Heart left ventricle (tissue), 16 donors: ENCODE measurements at regions of chr9 and their contacts with region 1.

Region 1: GRCh38 chr9:120936011-120936763 is 9.6 kb upstream of the TRAF1 start:
- DNase-seq: peak; percentile 93 to 96 (median 93)
- ATAC-seq: peak; percentile 73 to 88 (median 79)
- H3K4me3 ChIP-seq: peak overlapping the region in 2 of 12 donors; percentile 6 to 23
- H3K27ac ChIP-seq: peak overlapping the region; percentile 47 to 98 (median 72)
- H3K4me1 ChIP-seq: peaks cover 5 to 60% (median 39%) of the 10 kb centered on the region in 12 donors
- H3K27me3 ChIP-seq: no peaks in the 10 kb centered on the region
- CTCF ChIP-seq: peak; percentile 84 to 97 (median 93)
- POLR2A ChIP-seq: no peak

Region 2: DNA sequence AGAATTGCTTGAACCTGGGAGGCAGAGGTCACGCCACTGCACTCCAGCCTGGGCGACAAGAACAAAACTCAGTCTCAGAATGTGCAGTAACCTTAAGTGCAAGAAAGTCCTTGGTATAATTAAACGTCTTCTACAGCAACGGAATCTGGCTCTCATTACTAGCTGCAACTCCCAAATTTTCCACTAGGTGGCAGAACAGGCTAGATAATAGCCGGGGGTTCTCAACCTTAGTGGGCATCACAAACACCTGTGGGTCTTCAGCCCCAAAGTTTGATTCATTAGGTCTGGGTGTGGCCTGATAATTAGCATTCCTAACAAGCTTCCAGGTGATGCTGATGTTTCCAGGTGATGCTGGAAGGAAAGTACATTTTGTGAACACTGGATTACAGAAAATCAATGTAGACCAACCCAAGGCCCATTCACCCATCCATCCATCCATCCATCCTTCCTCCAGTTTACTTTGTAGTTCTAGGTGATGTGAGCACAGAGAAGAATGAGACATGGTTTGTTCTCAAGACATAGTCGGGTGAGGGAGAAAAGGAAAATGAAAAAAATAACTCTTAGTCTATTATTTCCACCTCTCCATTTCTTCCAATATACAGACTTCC is 180.3 kb before region 1 on chr9:
- intact Hi-C with region 1: loop called (anchors 1 to 5 kb)
- DNase-seq: peak in 2 of 5 donors; percentile 18 to 40
- ATAC-seq: peak in 3 of 4 donors; percentile 54 to 69 (median 68)
- H3K4me3 ChIP-seq: no peak overlapping the region
- H3K27ac ChIP-seq: no peak overlapping the region
- H3K4me1 ChIP-seq: peaks cover 0 to 27% (median 0%) of the 10 kb centered on the region in 12 donors
- H3K27me3 ChIP-seq: no peaks in the 10 kb centered on the region
- CTCF ChIP-seq: peak; percentile 82 to 95 (median 88)
- POLR2A ChIP-seq: peak in 1 of 2 donors; percentile 9

Region 3: GRCh38 chr9:120761011-120761410 is 175.2 kb before region 1 on chr9:
- intact Hi-C with region 1: loop called in 9 of 10 experiments (anchors 1 to 5 kb)
- DNase-seq: no peak
- ATAC-seq: no peak
- H3K4me3 ChIP-seq: no peak overlapping the region
- H3K27ac ChIP-seq: no peak overlapping the region
- H3K4me1 ChIP-seq: peaks cover 0 to 21% (median 0%) of the 10 kb centered on the region in 12 donors
- H3K27me3 ChIP-seq: no peaks in the 10 kb centered on the region
- CTCF ChIP-seq: no peak
- POLR2A ChIP-seq: no peak

Region 4: GRCh38 chr9:120792898-120793765 is 143.1 kb before region 1 on chr9 and contains the start of gene FBXW2:
- intact Hi-C with region 1: loop called in 2 of 10 experiments (anchors 5 kb)
- DNase-seq: peak; percentile 94 to 96 (median 95)
- ATAC-seq: peak; percentile 100
- H3K4me3 ChIP-seq: peak within 1 kb of the TSS; percentile 64 to 97 (median 82)
- H3K27ac ChIP-seq: peak within 1 kb of the TSS; percentile 45 to 96 (median 90)
- H3K4me1 ChIP-seq: peaks cover 3 to 51% (median 26%) of the 10 kb centered on the region in 12 donors
- H3K27me3 ChIP-seq: no peaks in the 10 kb centered on the region
- CTCF ChIP-seq: peak in 1 of 12 donors; percentile 6
- POLR2A ChIP-seq: peak in 1 of 2 donors; percentile 91
- total RNA-seq, gene FBXW2: 27.0 to 58.7 (median 42.0) TPM

Region 5: DNA sequence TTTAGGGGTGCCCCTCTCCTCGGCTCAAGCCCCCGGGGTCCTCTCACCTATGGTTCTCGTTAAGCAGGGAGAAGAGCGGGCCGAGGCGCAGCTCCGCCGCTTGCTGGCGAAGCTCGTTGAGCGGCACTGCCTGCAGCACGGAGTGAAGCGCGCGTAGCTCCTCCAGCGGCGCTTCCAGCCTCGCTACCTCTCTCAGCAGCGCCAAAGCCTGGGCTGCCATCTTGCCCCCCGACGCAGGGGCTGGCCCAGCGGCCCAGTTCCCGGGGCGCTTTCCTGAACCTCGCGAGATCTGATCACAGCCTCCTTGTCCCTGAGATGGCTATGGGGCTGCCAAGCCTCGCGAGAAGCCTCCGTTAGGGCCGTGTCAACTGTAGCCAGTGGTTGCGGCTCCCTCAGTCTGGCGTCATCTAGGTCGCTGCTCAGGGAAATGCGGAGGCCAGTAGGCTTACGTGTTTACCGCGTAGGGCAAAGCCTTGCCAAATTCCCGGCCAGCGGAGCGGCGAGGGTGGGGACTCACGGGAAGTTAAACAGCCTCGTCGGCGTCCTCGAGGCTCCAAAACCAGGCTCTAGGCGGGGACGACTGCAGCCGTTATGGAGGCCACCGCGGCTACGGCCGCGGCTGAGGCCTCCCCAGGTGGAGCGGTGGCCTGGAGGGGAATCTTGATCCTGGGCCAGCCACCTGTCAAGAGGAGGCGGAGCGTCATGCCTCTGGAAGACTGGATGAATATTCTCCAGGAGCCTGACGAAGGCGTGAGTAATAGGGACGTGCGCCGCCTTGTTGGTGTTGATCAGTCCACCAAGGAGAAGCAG is 93.3 kb before region 1 on chr9 and contains the start of gene PSMD5:
- intact Hi-C with region 1: loop called in 3 of 10 experiments (anchors 1 to 10 kb)
- DNase-seq: peak; percentile 98 to 100 (median 99)
- ATAC-seq: peak; percentile 99
- H3K4me3 ChIP-seq: peak within 1 kb of the TSS; percentile 60 to 95 (median 78)
- H3K27ac ChIP-seq: peak within 1 kb of the TSS; percentile 83 to 99 (median 94)
- H3K4me1 ChIP-seq: peaks cover 0 to 44% (median 17%) of the 10 kb centered on the region in 12 donors
- H3K27me3 ChIP-seq: no peaks in the 10 kb centered on the region
- CTCF ChIP-seq: peak in 3 of 12 donors; percentile 11 to 27 (median 13)
- POLR2A ChIP-seq: peak; percentile 34 to 84
- total RNA-seq, gene PSMD5: 10.2 to 17.9 (median 13.4) TPM

Region 6: DNA sequence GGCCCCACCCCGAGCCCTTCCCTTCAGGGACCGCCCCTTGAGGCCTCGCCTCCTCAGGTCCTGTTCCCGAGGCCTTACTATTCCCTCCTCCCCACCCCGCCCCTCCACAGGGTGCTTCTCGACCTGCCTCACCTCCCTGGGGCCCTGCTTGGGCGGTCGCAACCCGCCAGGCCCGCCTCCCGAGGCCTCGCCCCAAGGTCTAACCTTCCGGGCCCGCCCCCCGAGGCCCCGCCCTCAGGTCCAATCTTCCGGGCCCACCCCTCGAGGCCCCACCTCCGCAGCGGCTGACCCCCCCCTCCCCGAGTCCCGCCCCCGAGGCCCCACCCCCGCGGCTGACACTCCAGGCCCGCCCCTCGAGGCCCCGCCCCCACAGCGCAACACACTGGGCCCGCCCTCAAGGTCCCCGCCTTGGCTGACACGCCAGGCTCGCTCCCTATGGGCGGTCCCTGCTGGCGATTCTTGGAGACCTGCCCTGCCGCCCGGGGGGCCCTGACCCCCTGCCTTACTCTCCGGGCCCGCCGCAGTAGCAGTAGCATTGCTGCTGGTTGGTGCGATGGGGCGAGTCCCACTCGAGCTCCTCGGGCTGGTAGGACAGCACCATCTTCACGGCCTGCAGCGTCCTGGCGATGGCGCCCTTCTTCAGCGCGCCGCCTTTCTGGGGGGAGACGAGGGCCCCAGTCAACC is 67.4 kb before region 1 on chr9:
- intact Hi-C with region 1: loop called in 5 of 10 experiments (anchors 1 to 5 kb)
- DNase-seq: peak; percentile 95 to 97 (median 96)
- ATAC-seq: peak; percentile 88 to 97 (median 95)
- H3K4me3 ChIP-seq: peak overlapping the region; percentile 26 to 87 (median 58)
- H3K27ac ChIP-seq: peak overlapping the region; percentile 69 to 93 (median 84)
- H3K4me1 ChIP-seq: peaks cover 0 to 20% (median 2%) of the 10 kb centered on the region in 12 donors
- H3K27me3 ChIP-seq: no peaks in the 10 kb centered on the region
- CTCF ChIP-seq: peak in 9 of 12 donors; percentile 28 to 76 (median 44)
- POLR2A ChIP-seq: no peak

Region 7: GRCh38 chr9:120875954-120876841 is 60.0 kb before region 1 on chr9:
- intact Hi-C with region 1: loop called in 8 of 10 experiments (anchors 2 to 5 kb)
- DNase-seq: peak; percentile 84 to 92 (median 88)
- ATAC-seq: peak; percentile 38 to 84 (median 82)
- H3K4me3 ChIP-seq: peak overlapping the region; percentile 42 to 86 (median 75)
- H3K27ac ChIP-seq: peak overlapping the region; percentile 82 to 97 (median 92)
- H3K4me1 ChIP-seq: peaks cover 0 to 20% (median 6%) of the 10 kb centered on the region in 12 donors
- H3K27me3 ChIP-seq: no peaks in the 10 kb centered on the region
- CTCF ChIP-seq: peak in 1 of 12 donors; percentile 4
- POLR2A ChIP-seq: peak in 1 of 2 donors; percentile 43

Region 8: GRCh38 chr9:121340676-121341392 is 404.6 kb after region 1 on chr9:
- intact Hi-C with region 1: no loop called
- DNase-seq: no peak
- ATAC-seq: no peak
- H3K4me3 ChIP-seq: no peak overlapping the region
- H3K27ac ChIP-seq: peak overlapping the region in 2 of 12 donors; percentile 27 to 43
- H3K4me1 ChIP-seq: peaks cover 3 to 37% (median 20%) of the 10 kb centered on the region in 12 donors
- H3K27me3 ChIP-seq: no peaks in the 10 kb centered on the region
- CTCF ChIP-seq: no peak
- POLR2A ChIP-seq: no peak